Activated B cell treated with CpG ODN at 0.5 μM for 24 hours (primary cell): ENCODE measurements at regions of chr16 and their contacts with region 1.

Region 1: GRCh38 chr16:89507834-89508590 is at the start of gene SPG7:
- DNase-seq: peak; percentile 98
- ATAC-seq: peak; percentile 74
- H3K4me3 Mint-ChIP-seq: peak within 1 kb of the TSS; percentile 88
- H3K27ac Mint-ChIP-seq: peak within 1 kb of the TSS; percentile 87
- H3K4me1 Mint-ChIP-seq: peaks cover 41% of the 10 kb centered on the region
- H3K27me3 Mint-ChIP-seq: no peaks in the 10 kb centered on the region
- CTCF ChIP-seq: no peak
- total RNA-seq, gene SPG7: 84.7 and 102 TPM in 2 replicates

Region 2: DNA sequence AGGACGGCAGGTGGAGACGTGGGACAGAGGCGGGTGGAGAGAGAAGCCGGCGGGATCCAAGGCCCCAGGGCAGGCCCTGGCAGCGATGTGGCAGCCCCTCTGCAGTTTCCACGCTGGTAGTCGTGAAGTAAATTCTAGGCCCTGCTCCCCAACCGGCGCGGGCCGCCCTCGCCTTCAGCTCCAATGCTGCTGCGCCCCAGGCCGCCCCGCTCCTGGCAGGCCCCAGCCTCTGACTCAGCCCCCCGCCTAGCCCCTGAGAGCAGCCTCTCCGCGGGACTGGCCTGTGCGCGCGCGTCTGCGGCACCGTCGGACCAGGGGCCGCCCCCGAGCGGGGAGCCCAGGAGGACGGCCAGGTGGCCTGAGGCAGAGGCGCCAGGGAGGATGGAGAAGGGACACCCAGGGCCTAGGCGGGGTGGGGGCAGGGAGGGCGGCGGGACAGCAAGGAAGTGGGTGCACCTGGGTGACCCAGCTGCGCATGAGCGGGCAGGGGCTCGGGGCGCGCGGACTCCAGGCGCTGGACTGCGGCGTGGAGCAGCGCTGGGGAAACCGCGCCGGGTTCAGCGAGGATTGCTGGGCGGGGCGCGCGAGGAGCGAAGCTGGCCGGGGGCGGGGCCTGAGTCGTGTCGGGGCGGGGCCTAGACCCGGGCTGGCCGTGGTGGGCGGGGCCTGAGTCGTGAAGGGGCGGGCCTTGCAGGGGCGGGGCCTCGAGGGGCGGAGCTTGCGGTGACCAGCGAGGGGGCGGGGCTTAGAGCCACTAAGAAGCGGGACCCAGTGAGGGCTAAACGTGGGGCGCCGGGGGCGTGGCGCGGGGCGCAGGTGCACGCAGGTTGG is 260.9 kb before region 1 on chr16:
- CTCF ChIA-PET with region 1: no interaction called
- POLR2A ChIA-PET with region 1: no interaction called
- intact Hi-C with region 1: loop called (anchors 1 kb)
- DNase-seq: peak; percentile 92
- ATAC-seq: peak; percentile 97
- H3K4me3 Mint-ChIP-seq: peak overlapping the region; percentile 72
- H3K27ac Mint-ChIP-seq: no peak overlapping the region
- H3K4me1 Mint-ChIP-seq: peaks cover 13% of the 10 kb centered on the region
- H3K27me3 Mint-ChIP-seq: no peaks in the 10 kb centered on the region
- CTCF ChIP-seq: no peak

Region 3: DNA sequence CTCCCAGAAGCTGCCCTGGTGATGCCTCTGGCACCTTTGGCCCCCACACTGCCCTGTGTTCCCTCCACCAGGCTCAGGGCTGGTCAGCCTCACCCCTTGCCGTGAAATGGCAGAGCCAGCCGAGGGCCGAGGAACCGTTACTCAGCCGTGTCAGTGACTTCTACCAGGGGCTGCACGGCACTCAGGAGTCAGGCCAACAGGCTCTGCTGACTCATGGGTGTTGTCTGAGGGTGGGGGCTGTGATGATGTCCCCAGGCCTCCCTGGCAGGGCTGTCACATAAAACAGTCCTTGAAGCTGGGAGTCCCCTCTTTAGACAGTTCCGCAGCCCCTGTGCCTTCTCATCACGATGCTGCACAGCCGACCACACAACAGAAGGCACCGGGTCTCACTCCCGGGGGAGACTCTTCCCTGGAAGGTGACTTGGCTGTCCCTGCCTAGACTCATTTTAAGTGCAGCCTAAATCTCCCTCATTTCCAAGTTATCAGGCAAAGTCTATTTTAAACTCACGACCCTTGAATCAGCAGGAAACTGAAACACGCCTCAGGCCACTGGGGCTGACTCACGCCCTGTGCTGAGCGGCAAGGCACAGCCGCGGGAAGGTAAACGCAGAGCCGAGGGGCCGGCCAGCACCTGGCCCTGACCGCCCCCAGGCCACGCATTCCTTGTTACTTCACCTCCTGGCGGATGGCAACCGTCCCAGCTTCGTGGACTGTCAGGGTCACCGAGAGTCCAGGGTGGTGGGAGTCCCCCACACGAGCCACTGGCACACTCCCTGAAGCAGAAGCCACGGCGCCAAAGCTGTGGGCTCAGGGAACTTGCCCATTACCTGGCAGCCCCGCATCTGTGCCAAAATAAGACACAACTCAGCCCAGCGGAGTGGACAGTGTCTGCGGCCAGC is 187.9 kb before region 1 on chr16:
- CTCF ChIA-PET with region 1: interaction called, 3 read pairs
- POLR2A ChIA-PET with region 1: no interaction called
- intact Hi-C with region 1: loop called (anchors 5 kb)
- DNase-seq: no peak
- ATAC-seq: peak; percentile 35
- H3K4me3 Mint-ChIP-seq: peak overlapping the region; percentile 56
- H3K27ac Mint-ChIP-seq: peak overlapping the region; percentile 36
- H3K4me1 Mint-ChIP-seq: peaks cover 92% of the 10 kb centered on the region
- H3K27me3 Mint-ChIP-seq: no peaks in the 10 kb centered on the region
- CTCF ChIP-seq: no peak

Region 4: DNA sequence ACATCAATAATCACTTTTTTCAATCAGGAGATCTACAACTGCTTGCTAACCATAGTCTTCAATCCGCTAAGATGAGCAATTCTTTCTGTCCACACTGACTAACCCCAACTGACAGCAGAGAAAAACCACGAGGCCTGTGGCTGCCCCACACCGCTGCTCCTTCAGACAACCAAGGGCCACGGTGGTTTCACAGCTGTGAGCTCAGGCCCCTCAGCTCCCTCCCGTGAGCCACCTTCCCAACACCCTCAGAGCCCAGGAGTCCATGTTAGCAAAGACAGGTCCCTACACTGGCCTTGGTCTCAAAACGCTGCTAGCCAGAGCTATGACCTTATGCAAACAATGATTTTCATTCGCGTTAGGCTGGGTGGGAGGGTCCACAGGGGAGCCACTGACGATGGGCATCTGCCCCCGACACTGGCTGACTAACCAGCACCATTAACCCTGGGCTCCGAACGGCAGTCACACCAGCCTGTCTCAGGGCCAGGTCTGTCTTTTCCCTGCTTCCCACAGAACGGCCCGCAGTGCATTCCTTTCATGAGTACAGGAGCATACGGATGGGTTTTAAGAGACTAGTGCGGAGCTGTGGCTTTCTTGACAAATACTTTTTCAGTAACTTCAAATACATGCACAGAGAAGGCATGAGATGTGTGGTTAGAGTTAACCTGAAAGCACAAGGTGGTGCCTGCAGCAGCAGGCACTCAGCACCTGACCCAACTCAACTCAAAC is 84.9 kb before region 1 on chr16:
- CTCF ChIA-PET with region 1: no interaction called
- POLR2A ChIA-PET with region 1: interaction called, 4 read pairs
- intact Hi-C with region 1: loop called (anchors 5 kb)
- DNase-seq: no peak
- ATAC-seq: peak; percentile 77
- H3K4me3 Mint-ChIP-seq: peak overlapping the region; percentile 67
- H3K27ac Mint-ChIP-seq: peak overlapping the region; percentile 71
- H3K4me1 Mint-ChIP-seq: peaks cover 75% of the 10 kb centered on the region
- H3K27me3 Mint-ChIP-seq: no peaks in the 10 kb centered on the region
- CTCF ChIP-seq: no peak

Region 5: DNA sequence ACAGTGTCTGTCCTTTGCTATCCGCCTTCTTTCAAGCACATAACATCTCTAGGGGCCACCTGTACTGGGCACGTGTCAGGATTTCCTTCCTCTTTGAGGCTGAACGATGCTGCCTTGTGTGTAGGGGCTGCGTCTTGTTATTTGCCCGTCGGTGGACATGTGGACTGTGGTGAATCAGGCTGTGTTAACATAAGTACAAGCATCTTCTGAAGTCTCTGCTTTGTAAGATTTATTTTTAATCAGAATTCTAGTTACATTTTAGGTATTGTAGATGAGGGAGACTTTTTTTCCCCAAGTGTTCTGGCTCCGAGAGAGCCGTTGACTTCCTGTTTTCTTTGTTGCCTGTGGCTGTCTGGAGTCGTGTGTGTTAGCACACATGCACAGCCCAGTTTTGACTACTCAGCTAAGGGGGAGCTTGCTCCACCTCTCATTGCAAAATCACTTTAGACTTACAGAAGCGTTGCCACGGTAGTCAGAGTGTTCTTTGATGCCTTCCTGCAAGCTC is 26.3 kb after region 1 on chr16:
- CTCF ChIA-PET with region 1: no interaction called
- POLR2A ChIA-PET with region 1: interaction called, 6 read pairs
- intact Hi-C with region 1: loop called (anchors 1 kb)
- DNase-seq: peak; percentile 21
- ATAC-seq: peak; percentile 91
- H3K4me3 Mint-ChIP-seq: peak overlapping the region; percentile 68
- H3K27ac Mint-ChIP-seq: peak overlapping the region; percentile 62
- H3K4me1 Mint-ChIP-seq: peaks cover 22% of the 10 kb centered on the region
- H3K27me3 Mint-ChIP-seq: no peaks in the 10 kb centered on the region
- CTCF ChIP-seq: no peak